ENCODE measurements at regions of chr5 and their contacts with region 1.

Region 1: DNA sequence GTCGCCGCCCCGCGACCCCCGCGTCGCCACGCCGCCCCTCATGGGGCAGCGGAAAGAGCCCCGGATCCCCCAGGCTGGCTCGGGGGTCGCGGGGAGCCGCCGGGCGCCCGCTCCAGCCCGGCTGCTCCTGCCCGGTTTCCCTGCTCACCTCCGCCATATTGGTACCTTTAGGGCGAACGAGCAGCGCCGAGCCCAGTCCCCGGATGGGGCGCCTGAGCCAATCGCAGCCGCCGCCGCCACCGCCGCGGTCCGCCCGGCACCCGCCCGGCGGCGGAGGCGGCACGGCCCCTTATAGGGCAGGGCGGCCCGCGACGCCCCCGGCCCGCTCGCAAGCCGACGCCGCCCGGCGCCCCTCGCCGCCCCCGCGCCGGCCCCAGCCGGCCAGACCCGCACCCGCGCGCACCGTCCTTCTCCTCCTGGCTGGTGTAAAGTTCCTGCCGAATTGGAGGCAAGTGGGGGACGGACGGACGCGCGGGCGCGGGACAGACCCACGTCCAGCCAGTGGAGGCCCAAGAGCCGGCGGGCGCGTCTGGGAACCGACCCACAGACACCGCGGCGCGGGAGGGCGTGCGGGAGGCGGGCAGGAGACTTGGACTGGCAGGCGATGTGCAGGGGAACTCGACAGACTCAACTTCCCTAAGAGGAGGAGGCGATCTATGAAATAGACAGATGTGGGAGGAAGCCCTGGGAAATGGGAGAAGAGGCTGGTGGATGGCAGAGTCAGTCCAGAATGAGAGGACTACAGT is at the start of gene MIER3:
- DNase-seq: no peak
- H3K4me3 ChIP-seq: peak within 1 kb of the TSS; percentile 85 to 92
- H3K27ac ChIP-seq: peak within 1 kb of the TSS; percentile 88
- H3K4me1 ChIP-seq: peaks cover 18% of the 10 kb centered on the region
- H3K27me3 ChIP-seq: no peaks in the 10 kb centered on the region
- CTCF ChIP-seq: no peak
- POLR2A ChIP-seq: no peak
- total RNA-seq, gene MIER3: 16.0 TPM

Region 2: DNA sequence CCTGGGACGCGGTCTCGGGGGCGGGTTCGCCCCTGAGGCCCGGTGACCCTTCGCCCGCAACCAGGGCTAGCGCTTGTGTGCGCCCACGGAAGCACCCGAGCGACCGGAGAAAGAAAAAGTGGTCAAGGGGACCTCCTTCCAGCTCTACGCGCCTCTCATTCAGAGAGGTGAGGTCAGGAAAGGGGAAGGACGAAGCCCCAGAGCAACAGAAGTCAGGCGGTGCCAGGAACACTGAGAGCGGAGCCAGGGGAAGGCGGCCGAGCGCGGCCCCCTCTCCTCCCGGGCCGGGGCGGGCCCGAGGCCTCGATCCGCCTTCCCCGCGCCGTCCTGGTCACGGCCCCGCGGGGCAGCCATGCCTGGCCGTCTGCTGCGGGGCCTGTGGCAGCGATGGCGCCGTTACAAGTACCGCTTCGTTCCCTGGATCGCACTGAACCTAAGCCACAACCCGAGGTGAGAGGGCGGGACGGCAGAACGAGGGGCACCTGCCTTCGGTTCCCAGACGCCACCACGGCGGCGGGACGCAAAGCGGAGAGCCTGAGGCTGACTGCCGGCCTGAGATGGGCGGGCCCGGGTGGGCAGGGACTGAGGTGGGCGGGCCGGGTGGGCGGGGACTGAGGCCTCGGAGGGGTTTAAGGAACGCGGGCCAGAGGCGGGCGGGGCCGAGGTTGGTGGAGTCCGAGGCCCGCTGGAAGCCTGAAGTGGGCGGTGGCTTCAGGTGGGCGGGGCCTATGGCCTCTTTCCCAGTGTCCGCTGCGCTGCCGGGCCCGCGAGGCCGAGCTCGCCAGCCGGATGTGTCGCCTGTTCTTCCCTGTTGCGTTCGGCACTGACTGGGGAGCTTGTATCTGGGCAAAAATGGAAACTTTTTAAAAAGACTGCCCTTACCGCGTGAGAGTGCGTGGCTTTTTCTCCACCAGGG is 42.6 kb before region 1 on chr5 and contains the start of gene SETD9:
- intact Hi-C with region 1: loop called (anchors 5 kb)
- DNase-seq: peak; percentile 96 to 97
- H3K4me3 ChIP-seq: peak within 1 kb of the TSS; percentile 60 to 72
- H3K27ac ChIP-seq: peak within 1 kb of the TSS; percentile 95
- H3K4me1 ChIP-seq: peaks cover 8% of the 10 kb centered on the region
- H3K27me3 ChIP-seq: no peaks in the 10 kb centered on the region
- CTCF ChIP-seq: no peak
- POLR2A ChIP-seq: peak in 1 of 2 donors; percentile 47
- total RNA-seq, gene SETD9: 2.7 TPM

Measured in vagina (tissue), 2 donors.